Dorsolateral prefrontal cortex (tissue), 120 donors: ENCODE measurements at regions of chr11 and their contacts with region 1.

Region 1: DNA sequence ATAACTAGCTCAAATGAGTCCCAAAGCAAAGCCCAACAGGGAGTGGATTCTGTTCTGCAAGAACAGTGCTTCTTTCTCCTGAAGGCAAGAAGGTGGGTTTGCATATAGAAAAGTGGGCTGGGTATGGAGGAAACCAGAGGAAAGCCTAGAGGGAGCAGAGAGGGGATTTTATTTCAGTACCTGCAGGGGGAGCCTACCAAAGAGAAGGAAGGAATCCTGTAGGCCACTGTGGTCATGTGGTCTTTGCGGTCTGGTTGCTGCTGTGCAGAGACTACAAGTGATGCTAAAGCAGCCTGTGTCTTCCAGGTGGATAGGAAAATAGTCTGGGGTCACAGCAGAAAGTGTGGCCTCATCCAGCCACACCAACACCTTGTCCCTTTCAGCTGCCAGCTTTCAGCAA is 33.2 kb upstream of the ZBTB16 start:
- DNase-seq: peak in 1 of 10 donors; percentile 29
- H3K4me3 ChIP-seq: no peak overlapping the region
- H3K27ac ChIP-seq: peak overlapping the region in 32 of 59 donors; percentile 6 to 82 (median 51)
- H3K27me3 ChIP-seq: peaks cover 0 to 3% (median 0%) of the 10 kb centered on the region in 45 donors
- CTCF ChIP-seq: peak in 12 of 56 donors; percentile 7 to 31 (median 16)

Region 2: DNA sequence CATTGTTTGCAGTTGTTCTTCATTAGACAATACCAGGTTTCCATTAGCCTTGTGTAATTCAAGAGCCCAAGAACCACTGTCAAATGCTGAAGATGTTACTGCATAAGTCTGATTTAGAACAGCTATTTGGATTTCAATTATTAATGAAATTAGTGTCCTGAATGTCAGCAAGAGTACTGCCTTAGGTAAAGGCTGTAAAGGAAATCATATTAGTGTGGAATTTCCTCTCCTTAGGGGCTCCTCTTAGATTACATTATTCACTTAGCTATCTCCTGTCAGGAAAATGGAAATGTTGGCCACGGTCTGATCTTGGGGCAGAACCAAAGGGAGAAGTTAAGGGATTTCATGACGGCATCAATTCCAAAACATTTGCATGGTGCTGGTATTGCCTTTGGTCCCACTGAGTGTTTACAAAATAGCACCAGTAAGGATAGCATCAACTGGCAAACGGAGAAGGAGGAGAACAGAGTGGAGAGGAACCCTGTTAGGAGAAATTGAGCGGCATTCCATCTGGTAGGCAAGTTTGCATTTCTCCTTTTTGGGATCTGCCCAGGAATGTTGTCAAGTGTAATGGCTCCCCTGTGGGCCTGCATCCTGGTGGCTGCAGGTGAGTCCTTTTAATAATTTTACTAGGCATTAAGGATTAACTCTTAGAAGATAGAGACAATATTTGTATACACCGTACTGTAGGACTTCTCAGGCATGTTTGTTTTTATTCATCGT is 121.8 kb before region 1 on chr11 and contains the start of gene HTR3B:
- intact Hi-C with region 1: loop called in 1 of 2 experiments (anchors 5 kb)
- DNase-seq: peak in 1 of 10 donors; percentile 5
- H3K4me3 ChIP-seq: no peak within 1 kb of the TSS
- H3K27ac ChIP-seq: no peak within 1 kb of the TSS
- H3K27me3 ChIP-seq: peaks cover 0 to 3% (median 0%) of the 10 kb centered on the region in 45 donors
- CTCF ChIP-seq: no peak
- total RNA-seq, gene HTR3B: 2.4 to 20.4 (median 8.2) TPM